Natural killer cell (primary cell): ENCODE measurements at regions of chr2 and their contacts with region 1.

Region 1: DNA sequence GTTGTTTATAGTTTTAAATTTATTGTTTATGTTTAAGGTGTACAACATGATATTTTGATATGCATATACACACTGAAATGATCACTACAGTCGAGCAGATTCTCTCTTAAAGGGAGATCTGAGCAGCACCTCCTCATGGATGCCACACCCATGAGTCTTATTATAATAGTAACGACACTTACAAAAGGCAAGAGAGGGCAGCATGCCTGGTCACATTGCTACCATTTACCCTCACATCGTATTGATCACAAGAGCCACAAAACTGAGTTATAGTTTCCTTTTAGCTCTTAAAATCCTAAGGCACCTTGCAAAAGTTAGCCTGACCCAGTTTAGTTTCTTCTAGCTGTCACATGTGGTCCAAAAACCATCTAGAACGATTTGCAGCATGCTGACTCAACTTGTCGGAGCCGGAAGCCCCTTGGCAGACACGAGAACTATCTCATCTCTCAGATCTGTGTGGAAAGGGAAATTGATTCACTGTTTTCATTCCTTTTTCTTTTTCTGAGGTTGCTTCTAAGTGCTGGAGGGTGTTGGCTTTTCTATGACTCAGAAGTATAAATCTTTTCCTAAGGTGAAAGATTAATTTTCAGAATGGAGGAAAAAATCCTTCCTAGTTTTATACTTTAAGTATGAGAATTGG is 85.3 kb downstream of the CDC42EP3 start:
- DNase-seq: peak; percentile 53 to 89
- ATAC-seq: peak; percentile 83 to 91 (median 90)
- H3K4me3 ChIP-seq: no peak overlapping the region
- H3K4me3 Mint-ChIP-seq: peak overlapping the region; percentile 82
- H3K27ac ChIP-seq: peak overlapping the region; percentile 73
- H3K27ac Mint-ChIP-seq: peak overlapping the region; percentile 82 to 86
- H3K4me1 ChIP-seq: peaks cover 40% of the 10 kb centered on the region
- H3K4me1 Mint-ChIP-seq: peaks cover 66 to 69% of the 10 kb centered on the region in 2 donors
- H3K27me3 ChIP-seq: no peaks in the 10 kb centered on the region
- H3K27me3 Mint-ChIP-seq: no peaks in the 10 kb centered on the region
- CTCF ChIP-seq: no peak

Region 2: DNA sequence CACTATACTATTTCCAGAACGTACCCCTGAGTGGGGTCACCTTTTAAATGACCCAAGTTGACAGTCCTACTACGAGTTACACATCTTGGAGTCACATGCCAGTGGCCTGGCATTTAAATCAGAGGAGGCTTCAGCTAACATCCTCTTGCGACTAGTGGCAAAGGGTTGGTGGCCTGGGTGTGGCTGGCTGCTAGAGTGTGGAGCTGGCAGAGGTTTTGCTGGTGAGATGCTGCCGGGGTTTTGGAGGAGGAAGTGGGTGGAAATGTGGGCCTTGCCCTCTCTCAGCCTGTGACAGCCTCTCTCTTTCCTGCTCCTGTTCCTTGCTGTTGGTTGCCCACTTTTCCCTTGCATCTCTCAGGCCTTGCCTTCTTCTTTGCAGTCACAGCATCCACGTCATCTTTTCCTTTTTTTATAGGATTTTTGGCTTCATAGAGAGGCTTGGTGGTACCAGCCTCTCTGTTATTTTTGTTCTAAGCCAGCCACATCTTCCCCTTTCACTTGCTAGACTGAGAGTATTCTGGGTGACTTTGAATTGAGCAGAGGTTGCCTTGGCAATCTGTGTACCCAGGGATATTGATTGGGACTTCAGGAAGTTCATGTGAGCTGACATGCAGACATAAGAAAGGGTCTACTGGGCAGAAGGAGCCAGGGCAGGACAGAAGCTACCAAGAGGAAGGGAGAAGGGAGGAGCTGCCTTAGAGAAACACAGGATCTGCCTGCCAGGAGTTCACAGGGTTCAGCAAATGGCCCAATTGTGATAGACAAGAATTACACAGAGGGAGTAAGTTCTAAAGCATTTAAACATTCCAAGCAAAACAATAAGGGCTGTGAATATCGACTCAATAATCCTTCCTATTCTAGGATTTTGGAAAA is 29.9 kb after region 1 on chr2:
- intact Hi-C with region 1: no loop called
- DNase-seq: peak; percentile 59 to 80
- ATAC-seq: peak; percentile 82 to 92 (median 85)
- H3K4me3 ChIP-seq: no peak overlapping the region
- H3K4me3 Mint-ChIP-seq: peak overlapping the region; percentile 59
- H3K27ac ChIP-seq: peak overlapping the region; percentile 68
- H3K27ac Mint-ChIP-seq: peak overlapping the region; percentile 88 to 92
- H3K4me1 ChIP-seq: peaks cover 40% of the 10 kb centered on the region
- H3K4me1 Mint-ChIP-seq: peaks cover 66 to 68% of the 10 kb centered on the region in 2 donors
- H3K27me3 ChIP-seq: no peaks in the 10 kb centered on the region
- H3K27me3 Mint-ChIP-seq: no peaks in the 10 kb centered on the region
- CTCF ChIP-seq: no peak

Region 3: DNA sequence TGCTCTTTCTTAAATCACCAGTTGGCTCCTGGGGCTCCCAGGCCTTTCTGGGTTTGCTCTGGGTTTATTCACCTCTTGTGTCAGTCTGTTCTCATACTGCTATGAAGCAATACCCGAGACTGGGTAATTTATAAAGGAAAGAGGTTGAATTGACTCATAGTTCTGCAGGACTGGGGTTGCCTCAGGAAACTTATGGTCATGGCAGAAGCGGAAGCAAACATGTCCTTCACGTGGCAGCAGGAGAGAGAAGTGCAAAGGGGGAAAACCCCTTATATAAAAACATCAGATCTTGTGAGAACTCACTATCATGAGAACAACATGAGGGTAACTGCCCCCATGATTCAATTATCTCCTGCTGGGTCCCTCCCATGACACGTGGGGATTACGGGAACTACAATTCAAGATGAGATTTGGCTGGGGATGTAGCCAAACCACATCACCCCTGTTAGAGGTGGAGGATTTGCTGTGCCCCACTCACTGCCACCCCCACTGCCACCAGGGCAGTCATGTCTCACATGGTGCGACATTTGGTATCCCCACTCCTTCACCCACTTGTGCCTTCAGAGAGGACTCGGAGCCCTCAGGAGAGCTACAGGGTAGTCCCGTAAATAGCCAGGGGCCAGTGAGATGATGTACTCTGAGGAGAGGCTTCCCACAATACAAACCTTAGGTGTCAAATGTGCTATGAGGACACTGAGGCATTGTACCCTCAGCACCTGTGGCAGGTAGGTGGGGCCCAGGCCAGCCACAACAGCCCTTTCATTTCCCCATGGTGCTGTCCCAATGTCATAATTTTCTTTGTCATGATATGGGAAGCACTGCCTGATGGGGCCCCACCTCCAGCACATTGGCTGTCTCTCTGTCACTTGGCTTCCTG is 49.6 kb after region 1 on chr2:
- intact Hi-C with region 1: loop called (anchors 1 kb)
- DNase-seq: peak; percentile 55 to 90
- ATAC-seq: peak; percentile 79 to 93 (median 89)
- H3K4me3 ChIP-seq: no peak overlapping the region
- H3K4me3 Mint-ChIP-seq: peak overlapping the region; percentile 74
- H3K27ac ChIP-seq: peak overlapping the region; percentile 91
- H3K27ac Mint-ChIP-seq: peak overlapping the region; percentile 91 to 96
- H3K4me1 ChIP-seq: peaks cover 38% of the 10 kb centered on the region
- H3K4me1 Mint-ChIP-seq: peaks cover 64 to 76% of the 10 kb centered on the region in 2 donors
- H3K27me3 ChIP-seq: no peaks in the 10 kb centered on the region
- H3K27me3 Mint-ChIP-seq: no peaks in the 10 kb centered on the region
- CTCF ChIP-seq: no peak

Region 4: DNA sequence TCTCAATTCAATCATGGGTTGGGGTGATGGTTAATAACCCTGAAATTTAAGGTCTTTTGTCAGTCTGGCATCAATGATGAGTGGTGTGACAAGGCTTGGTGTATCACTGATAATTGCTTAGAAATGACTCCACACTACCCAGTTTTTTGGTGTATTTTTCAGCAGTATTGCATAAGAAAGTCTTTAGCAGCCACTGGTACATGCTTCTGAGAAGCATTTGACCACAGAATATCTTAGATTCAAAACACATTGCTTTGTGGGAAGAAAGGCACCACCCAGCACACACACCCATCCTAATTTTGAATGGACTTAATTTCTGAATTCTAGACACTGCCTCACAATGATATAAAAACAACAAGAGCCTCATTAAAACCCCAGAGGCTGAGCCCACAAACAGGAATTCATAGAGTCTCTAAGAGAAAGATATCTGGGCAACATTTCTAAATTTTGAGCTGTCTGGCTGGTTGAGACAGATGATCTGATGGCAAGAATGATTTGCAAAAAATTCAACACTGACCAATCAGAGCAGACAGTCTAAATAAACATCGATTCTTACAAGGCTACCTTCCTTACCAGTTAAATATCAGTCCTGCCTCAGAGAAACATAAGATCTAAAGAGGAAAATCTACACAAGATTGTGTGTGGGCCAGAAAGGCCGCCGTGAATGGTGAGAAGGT is 604.6 kb after region 1 on chr2:
- intact Hi-C with region 1: no loop called
- DNase-seq: no peak
- ATAC-seq: peak in 1 of 3 donors; percentile 12
- H3K4me3 ChIP-seq: no peak overlapping the region
- H3K4me3 Mint-ChIP-seq: no peak overlapping the region
- H3K27ac ChIP-seq: no peak overlapping the region
- H3K27ac Mint-ChIP-seq: no peak overlapping the region
- H3K4me1 ChIP-seq: peaks cover 8% of the 10 kb centered on the region
- H3K4me1 Mint-ChIP-seq: peaks cover 14 to 29% of the 10 kb centered on the region in 2 donors
- H3K27me3 ChIP-seq: peaks cover 7% of the 10 kb centered on the region
- H3K27me3 Mint-ChIP-seq: peaks cover 27 to 49% of the 10 kb centered on the region in 2 donors
- CTCF ChIP-seq: no peak